Activated CD8-positive, alpha-beta T cell treated with anti-CD3 and anti-CD28 coated beads, Interleukin-2, amount 10 ng/mL, durations not matched to agents 7 days and 5 days (primary cell): ENCODE measurements at regions of chr3 and their contacts with region 1.

Region 1: GRCh38 chr3:8324740-8325139 is 176.9 kb upstream of the LMCD1 start:
- DNase-seq: peak; percentile 54
- ATAC-seq: peak; percentile 75
- H3K4me3 Mint-ChIP-seq: no peak overlapping the region
- H3K27ac Mint-ChIP-seq: no peak overlapping the region
- H3K4me1 Mint-ChIP-seq: no peaks in the 10 kb centered on the region
- H3K27me3 Mint-ChIP-seq: no peaks in the 10 kb centered on the region

Region 2: GRCh38 chr3:8355346-8355745 is 30.6 kb after region 1 on chr3:
- CTCF ChIA-PET with region 1: interaction called, 11 read pairs
- POLR2A ChIA-PET with region 1: no interaction called
- DNase-seq: no peak
- ATAC-seq: no peak
- H3K4me3 Mint-ChIP-seq: no peak overlapping the region
- H3K27ac Mint-ChIP-seq: peak overlapping the region; percentile 1
- H3K4me1 Mint-ChIP-seq: peaks cover 25% of the 10 kb centered on the region
- H3K27me3 Mint-ChIP-seq: no peaks in the 10 kb centered on the region

Region 3: GRCh38 chr3:8509961-8510360 is 185.2 kb after region 1 on chr3:
- CTCF ChIA-PET with region 1: no interaction called
- POLR2A ChIA-PET with region 1: no interaction called
- DNase-seq: no peak
- ATAC-seq: no peak
- H3K4me3 Mint-ChIP-seq: no peak overlapping the region
- H3K27ac Mint-ChIP-seq: no peak overlapping the region
- H3K4me1 Mint-ChIP-seq: no peaks in the 10 kb centered on the region
- H3K27me3 Mint-ChIP-seq: peaks cover 8% of the 10 kb centered on the region